CD8-positive, alpha-beta T cell (primary cell): ENCODE measurements at regions of chr19 and their contacts with region 1.

Region 1: GRCh38 chr19:1848399-1849131 is at the start of gene REXO1:
- DNase-seq: peak; percentile 96 to 99 (median 97)
- ATAC-seq: peak; percentile 76
- H3K4me3 ChIP-seq: peak within 1 kb of the TSS; percentile 86 to 90
- H3K4me3 Mint-ChIP-seq: peak within 1 kb of the TSS; percentile 88
- H3K27ac ChIP-seq: peak within 1 kb of the TSS; percentile 93 to 97
- H3K27ac Mint-ChIP-seq: peak within 1 kb of the TSS; percentile 93
- H3K4me1 ChIP-seq: peaks cover 72% of the 10 kb centered on the region
- H3K4me1 Mint-ChIP-seq: peaks cover 56% of the 10 kb centered on the region
- H3K27me3 ChIP-seq: no peaks in the 10 kb centered on the region
- H3K27me3 Mint-ChIP-seq: no peaks in the 10 kb centered on the region
- CTCF ChIP-seq: peak; percentile 91
- total RNA-seq, gene REXO1: 143 to 152 TPM

Region 2: DNA sequence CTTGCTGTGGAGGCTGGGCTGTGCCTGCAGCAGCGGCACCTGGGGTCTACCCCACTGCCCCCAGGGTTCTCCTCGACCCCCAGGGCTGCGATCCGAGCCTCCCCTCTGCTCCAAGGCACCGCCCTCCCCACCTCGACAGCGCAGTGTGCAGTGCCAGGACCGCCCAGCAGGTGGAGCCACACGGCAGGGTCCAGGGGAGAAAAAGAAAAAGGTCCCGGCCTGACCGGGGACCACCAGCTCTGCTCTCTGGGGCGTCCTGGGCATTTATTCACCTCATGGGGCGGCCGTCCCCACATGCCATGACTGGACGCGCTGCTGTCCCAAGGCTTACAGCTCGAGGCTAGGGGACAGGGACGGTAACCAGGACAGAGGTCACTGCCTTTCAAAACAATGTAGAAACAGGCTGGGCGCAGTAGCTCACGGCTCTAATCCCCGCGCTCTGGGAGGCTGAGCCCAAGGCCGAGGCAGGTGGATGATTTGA is 10.9 kb before region 1 on chr19:
- CTCF ChIA-PET with region 1: interaction called, 17 read pairs
- POLR2A ChIA-PET with region 1: no interaction called
- intact Hi-C with region 1: no loop called
- DNase-seq: peak in 7 of 9 experiments; percentile 41 to 71 (median 66)
- ATAC-seq: peak; percentile 92
- H3K4me3 ChIP-seq: no peak overlapping the region
- H3K4me3 Mint-ChIP-seq: no peak overlapping the region
- H3K27ac ChIP-seq: no peak overlapping the region
- H3K27ac Mint-ChIP-seq: no peak overlapping the region
- H3K4me1 ChIP-seq: peaks cover 22% of the 10 kb centered on the region
- H3K4me1 Mint-ChIP-seq: peaks cover 40% of the 10 kb centered on the region
- H3K27me3 ChIP-seq: no peaks in the 10 kb centered on the region
- H3K27me3 Mint-ChIP-seq: no peaks in the 10 kb centered on the region
- CTCF ChIP-seq: peak; percentile 88